ENCODE measurements at regions of chr11 and their contacts with region 1.

Region 1: DNA sequence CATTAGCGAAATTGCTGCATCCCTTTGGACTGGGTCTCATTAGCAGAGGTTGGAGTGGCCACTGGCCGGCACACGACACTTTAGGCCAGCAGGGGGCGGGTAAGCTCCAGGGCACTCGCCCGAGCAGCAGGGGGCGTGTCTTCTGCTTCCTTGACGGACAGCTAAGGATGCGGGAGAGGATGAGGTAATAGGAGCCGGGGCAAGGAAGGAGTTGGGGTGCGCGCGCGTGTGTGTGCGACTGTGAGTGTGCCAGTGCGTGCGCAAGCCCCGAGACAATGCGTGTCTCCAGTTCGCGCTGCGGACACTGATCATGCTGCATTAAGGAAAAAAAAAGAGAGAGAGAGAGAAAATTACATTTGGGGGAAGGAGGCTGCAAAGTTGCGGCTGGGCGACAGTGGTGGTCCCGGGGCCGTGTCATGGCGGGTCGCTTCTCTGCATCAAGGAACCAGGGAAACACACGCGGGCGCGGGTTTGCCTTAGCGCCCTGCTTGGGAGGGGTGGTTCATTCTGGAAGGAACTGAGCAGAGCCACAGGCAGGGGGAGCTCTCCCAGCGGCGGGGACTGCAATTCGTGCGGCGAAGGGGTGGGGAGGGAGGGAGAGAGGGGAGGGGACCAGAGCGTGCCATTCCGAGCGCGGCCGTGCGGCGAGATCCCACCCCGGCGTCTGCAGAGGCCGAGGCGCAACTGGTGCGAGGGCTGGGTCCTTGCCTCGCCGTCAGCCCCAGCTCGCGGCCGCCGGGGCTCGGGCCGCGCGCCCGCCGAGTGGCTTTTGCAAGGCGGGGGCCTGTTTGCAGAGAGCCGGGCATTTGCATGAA is at the start of gene DTX4:
- DNase-seq: peak; percentile 91 to 96 (median 92)
- ATAC-seq: peak; percentile 95 to 97 (median 96)
- H3K4me3 ChIP-seq: peak within 1 kb of the TSS; percentile 41 to 79 (median 64)
- H3K27ac ChIP-seq: peak within 1 kb of the TSS in 11 of 12 donors; percentile 22 to 74 (median 49)
- H3K4me1 ChIP-seq: peaks cover 0 to 27% (median 10%) of the 10 kb centered on the region in 12 donors
- H3K27me3 ChIP-seq: peaks cover 0 to 9% (median 0%) of the 10 kb centered on the region in 9 donors
- CTCF ChIP-seq: peak; percentile 70 to 90 (median 83)
- POLR2A ChIP-seq: peak in 1 of 2 donors; percentile 8
- total RNA-seq, gene DTX4: 0.74 to 6.8 (median 2.1) TPM

Region 2: GRCh38 chr11:59207988-59208451 is 36.3 kb after region 1 on chr11:
- intact Hi-C with region 1: loop called (anchors 1 to 2 kb)
- DNase-seq: peak in 2 of 5 donors; percentile 29 to 43
- ATAC-seq: peak in 3 of 4 donors; percentile 29 to 81 (median 53)
- H3K4me3 ChIP-seq: peak overlapping the region in 6 of 12 donors; percentile 22 to 61 (median 32)
- H3K27ac ChIP-seq: peak overlapping the region in 5 of 12 donors; percentile 10 to 49 (median 35)
- H3K4me1 ChIP-seq: peaks cover 0 to 25% (median 6%) of the 10 kb centered on the region in 12 donors
- H3K27me3 ChIP-seq: no peaks in the 10 kb centered on the region
- CTCF ChIP-seq: peak; percentile 62 to 83 (median 73)
- POLR2A ChIP-seq: no peak

Region 3: DNA sequence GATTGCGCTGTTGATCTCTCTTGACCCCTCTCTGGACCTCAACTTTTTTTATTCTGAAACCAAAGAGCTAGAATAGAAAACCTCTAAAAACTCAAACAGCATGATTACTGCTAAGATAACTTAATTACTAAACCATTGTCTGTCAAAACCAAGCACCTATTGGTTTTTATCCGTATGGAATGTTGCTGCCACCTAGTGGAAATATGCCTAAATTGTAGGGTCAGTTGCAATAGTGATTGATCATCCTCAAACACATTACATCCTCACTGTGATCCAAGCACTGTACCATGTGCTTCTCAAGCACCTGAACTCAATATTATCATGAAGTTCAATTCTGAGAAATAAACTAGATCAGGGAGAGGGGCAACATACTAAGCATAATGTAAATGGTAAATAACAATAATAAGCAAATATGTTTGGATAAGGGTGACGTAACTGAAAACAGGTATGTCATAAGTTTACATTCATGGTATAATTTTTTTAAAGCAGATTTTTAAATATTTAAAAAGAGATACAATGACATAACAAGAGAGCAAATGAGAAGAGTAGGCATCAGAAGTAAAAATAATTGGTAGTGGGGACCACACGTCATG is 258.3 kb after region 1 on chr11:
- intact Hi-C with region 1: loop called in 9 of 10 experiments (anchors 2 to 10 kb)
- DNase-seq: peak in 1 of 5 donors; percentile 8
- ATAC-seq: no peak
- H3K4me3 ChIP-seq: no peak overlapping the region
- H3K27ac ChIP-seq: no peak overlapping the region
- H3K4me1 ChIP-seq: no peaks in the 10 kb centered on the region
- H3K27me3 ChIP-seq: peaks cover 0 to 4% (median 0%) of the 10 kb centered on the region in 9 donors
- CTCF ChIP-seq: peak; percentile 36 to 69 (median 59)
- POLR2A ChIP-seq: no peak

Measured in heart left ventricle (tissue), 16 donors.